ENCODE measurements at regions of chr2 and their contacts with region 1.

Region 1: GRCh38 chr2:218979846-218980734 is 4.9 kb downstream of the FEV start:
- DNase-seq: peak; percentile 79 to 89
- ATAC-seq: peak; percentile 87 to 96
- H3K4me3 ChIP-seq: peak overlapping the region; percentile 16
- H3K27ac ChIP-seq: peak overlapping the region; percentile 26 to 75; a peak in 4 of 6 replicates
- H3K4me1 ChIP-seq: peaks cover 18% of the 10 kb centered on the region
- CTCF ChIP-seq: peak; percentile 97
- EP300 ChIP-seq: no peak
- POLR2A ChIP-seq: no peak
- RAD21 ChIP-seq: peak; percentile 73 to 76

Region 2: DNA sequence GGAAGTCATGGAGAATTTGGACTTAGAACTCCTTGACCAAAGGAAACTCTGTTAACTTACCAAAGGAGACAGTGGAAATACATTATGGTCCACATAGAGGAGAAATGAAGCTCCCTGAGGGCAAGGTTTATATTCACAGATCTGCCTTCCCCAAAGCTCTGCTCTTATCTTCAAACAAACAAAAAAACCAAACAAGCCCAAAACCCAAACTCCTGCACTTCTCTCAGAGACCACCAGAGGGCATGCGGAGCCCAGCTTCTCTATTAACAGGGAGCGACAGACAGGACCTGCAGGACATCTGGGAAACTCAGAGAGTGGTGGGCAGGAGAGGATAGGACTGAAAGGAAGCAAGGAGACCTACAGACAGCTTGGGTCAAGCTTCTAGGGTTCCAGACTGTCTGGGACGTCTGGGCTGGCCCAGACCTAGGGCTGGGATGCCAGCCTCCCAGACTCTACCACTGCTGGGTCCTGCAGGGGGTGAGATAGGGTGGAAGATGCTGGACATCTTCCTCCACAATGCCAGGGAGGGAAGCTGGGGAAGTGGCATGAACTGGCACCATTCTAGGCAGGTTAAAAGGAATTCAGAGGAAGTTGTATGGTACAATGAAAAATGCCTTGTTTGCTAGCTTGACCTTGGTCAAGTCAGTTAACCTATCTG is 103.4 kb before region 1 on chr2:
- CTCF ChIA-PET with region 1: interaction called, 22 read pairs
- POLR2A ChIA-PET with region 1: no interaction called
- DNase-seq: peak; percentile 62 to 72
- ATAC-seq: peak; percentile 33 to 67; a peak in 5 of 6 replicates
- H3K4me3 ChIP-seq: no peak overlapping the region
- H3K27ac ChIP-seq: no peak overlapping the region
- H3K4me1 ChIP-seq: peaks cover 12% of the 10 kb centered on the region; the same call in 1 of the 3 replicates
- CTCF ChIP-seq: peak; percentile 85
- EP300 ChIP-seq: no peak
- POLR2A ChIP-seq: no peak
- RAD21 ChIP-seq: peak; percentile 75 to 90

Region 3: GRCh38 chr2:218898109-218898878 is 81.8 kb before region 1 on chr2:
- CTCF ChIA-PET with region 1: interaction called, 20 read pairs
- POLR2A ChIA-PET with region 1: no interaction called
- DNase-seq: peak; percentile 54 to 71
- ATAC-seq: peak; percentile 67 to 86
- H3K4me3 ChIP-seq: peak overlapping the region; percentile 34
- H3K27ac ChIP-seq: peak overlapping the region in 1 of 2 experiments; percentile 52; a peak in 1 of 6 replicates
- H3K4me1 ChIP-seq: peaks cover 32% of the 10 kb centered on the region
- CTCF ChIP-seq: peak; percentile 92
- EP300 ChIP-seq: no peak
- POLR2A ChIP-seq: no peak
- RAD21 ChIP-seq: peak; percentile 79 to 86

Region 4: DNA sequence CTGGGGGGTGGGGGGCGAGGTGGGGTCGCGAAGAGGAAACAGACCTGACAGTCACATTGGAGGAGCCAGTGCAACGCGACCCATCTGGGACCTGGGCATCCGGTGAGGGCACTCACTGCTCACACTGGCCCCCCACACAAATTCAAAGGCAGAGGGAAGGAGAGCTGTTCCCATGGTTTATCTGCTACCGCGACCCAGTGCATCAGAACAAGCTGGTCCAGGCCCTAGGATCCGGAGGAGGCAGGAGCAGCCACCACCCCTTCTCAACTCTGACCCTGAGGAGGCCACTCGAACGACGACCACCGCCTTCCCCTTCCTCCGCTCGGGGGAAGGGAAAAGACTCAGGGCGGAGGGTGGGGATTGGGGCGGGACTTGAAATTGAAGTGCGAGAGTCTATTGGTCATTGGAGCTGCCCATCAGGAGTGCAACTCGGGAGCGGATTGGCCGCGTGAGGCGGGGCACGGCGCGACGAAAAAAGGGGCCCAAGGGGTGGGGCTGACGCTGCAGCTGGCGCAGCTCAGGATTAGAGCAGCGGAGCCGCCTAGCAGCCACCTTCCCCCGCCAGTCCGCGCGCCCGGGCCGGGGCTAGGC is 20.9 kb before region 1 on chr2 and contains the start of gene CDK5R2:
- CTCF ChIA-PET with region 1: interaction called, 140 read pairs
- POLR2A ChIA-PET with region 1: interaction called, 8 read pairs
- DNase-seq: peak; percentile 88 to 97
- ATAC-seq: peak; percentile 70 to 86
- H3K4me3 ChIP-seq: peak within 1 kb of the TSS; percentile 64
- H3K27ac ChIP-seq: peak within 1 kb of the TSS; percentile 73 to 74
- H3K4me1 ChIP-seq: peaks cover 35% of the 10 kb centered on the region
- CTCF ChIP-seq: no peak
- EP300 ChIP-seq: no peak
- POLR2A ChIP-seq: 0 out of 2 replicates have a peak, but pooled peaks have one; percentile 21
- RAD21 ChIP-seq: no peak
- polyA plus RNA-seq, gene CDK5R2: 0.77 and 0.94 TPM in 2 replicates

Region 5: GRCh38 chr2:219002395-219003266 is 22.5 kb after region 1 on chr2:
- CTCF ChIA-PET with region 1: interaction called, 101 read pairs
- POLR2A ChIA-PET with region 1: no interaction called
- DNase-seq: peak; percentile 82 to 93
- ATAC-seq: peak; percentile 84 to 93
- H3K4me3 ChIP-seq: peak overlapping the region; percentile 59
- H3K27ac ChIP-seq: peak overlapping the region; percentile 64 to 83
- H3K4me1 ChIP-seq: peaks cover 7% of the 10 kb centered on the region
- CTCF ChIP-seq: peak; percentile 68
- EP300 ChIP-seq: no peak
- POLR2A ChIP-seq: peak; percentile 52
- RAD21 ChIP-seq: 0 out of 5 replicates have a peak, but pooled peaks have one; percentile 17 to 19

Region 6: GRCh38 chr2:219020604-219021365 is 40.7 kb after region 1 on chr2:
- CTCF ChIA-PET with region 1: interaction called, 10 read pairs
- POLR2A ChIA-PET with region 1: no interaction called
- DNase-seq: no peak
- ATAC-seq: no peak
- H3K4me3 ChIP-seq: no peak overlapping the region
- H3K27ac ChIP-seq: no peak overlapping the region
- H3K4me1 ChIP-seq: no peaks in the 10 kb centered on the region
- CTCF ChIP-seq: no peak
- EP300 ChIP-seq: no peak
- POLR2A ChIP-seq: no peak
- RAD21 ChIP-seq: no peak

Measured in A549 (cell line).